ENCODE measurements at regions of chr10 and their contacts with region 1.

Region 1: DNA sequence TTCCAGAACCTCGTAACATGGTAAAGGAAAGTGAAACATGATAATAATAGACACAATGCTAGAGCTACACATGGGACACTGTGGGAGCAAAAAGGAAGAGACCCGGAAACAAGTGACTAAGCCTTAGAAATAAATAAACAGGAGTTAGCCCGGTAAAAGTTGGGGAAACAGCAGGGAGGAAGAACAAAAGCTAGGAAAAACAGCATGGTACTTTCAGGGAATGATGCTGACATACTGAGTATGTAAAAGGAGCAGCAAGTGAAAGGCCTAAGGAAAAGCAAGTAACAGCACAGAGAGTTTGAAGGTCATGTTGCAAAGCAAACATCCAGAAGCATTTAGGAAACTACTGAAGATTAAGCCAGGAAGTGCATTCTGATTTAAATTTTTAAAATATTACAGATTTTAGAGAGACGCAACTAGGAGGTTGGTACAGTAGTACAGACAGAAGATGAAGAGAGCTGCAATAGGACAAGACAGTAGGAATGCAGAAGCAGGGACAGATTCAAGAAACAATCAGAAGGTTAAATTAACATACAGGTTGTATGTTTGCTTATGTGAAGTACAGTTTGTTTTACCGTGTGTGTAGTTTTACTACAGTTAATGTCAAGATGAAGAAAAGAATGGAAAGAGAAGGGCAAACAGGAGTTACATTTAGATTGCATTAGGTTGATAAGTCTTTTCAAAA is 63.7 kb downstream of the ARHGAP12 start:
- DNase-seq: no peak
- ATAC-seq: peak in 1 of 4 donors; percentile 19
- H3K4me3 ChIP-seq: peak overlapping the region; percentile 5
- H3K27ac ChIP-seq: peak overlapping the region; percentile 7
- H3K4me1 ChIP-seq: peaks cover 21% of the 10 kb centered on the region
- H3K27me3 ChIP-seq: no peaks in the 10 kb centered on the region
- CTCF ChIP-seq: no peak

Region 2: GRCh38 chr10:31928549-31929260 is 63.7 kb after region 1 on chr10 and contains the start of gene ARHGAP12:
- intact Hi-C with region 1: loop called (anchors 5 to 10 kb)
- DNase-seq: peak; percentile 93 to 95
- ATAC-seq: peak; percentile 96 to 98 (median 96)
- H3K4me3 ChIP-seq: peak within 1 kb of the TSS; percentile 90
- H3K27ac ChIP-seq: peak within 1 kb of the TSS; percentile 91
- H3K4me1 ChIP-seq: peaks cover 23% of the 10 kb centered on the region
- H3K27me3 ChIP-seq: no peaks in the 10 kb centered on the region
- CTCF ChIP-seq: peak; percentile 9
- total RNA-seq, gene ARHGAP12: 10.9 to 14.9 (median 11.3) TPM

Region 3: DNA sequence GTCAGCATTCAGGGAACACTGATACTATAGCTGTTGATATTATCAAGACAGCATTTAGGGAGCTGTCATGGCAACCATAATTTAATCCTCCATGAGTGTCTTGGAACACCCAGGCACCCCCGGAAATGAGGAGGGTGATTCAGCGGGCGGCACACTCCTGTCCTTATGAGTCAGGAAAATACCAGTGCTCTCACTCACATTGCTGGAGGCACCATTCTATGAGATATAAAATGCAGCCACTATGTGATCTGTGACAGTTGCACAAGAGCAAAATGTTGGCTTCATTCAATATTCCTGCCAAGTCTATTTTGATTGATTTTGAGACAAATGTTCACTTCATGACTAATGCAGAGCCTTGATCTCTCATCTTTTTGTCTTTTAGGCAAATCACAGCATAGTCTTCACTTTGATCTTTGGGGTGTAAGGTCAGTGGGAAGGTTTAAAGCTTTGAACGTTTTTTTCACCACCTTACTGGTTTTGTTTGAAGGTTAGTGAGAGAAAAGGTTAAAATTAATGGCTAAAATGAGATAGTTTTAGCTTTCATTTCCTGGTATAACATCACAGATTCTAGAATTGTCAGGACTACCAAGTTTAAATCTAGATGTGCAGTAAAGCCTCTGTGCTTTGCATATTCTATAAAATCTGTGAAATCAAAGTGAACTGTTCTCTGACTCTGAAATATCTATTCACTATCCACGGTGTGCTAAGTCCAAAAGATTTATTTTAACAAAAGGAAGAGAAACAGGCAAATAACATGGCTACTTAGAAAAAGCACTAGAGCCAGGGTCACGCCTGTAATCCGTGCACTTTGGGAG is 76.1 kb after region 1 on chr10:
- intact Hi-C with region 1: loop called (anchors 5 kb)
- DNase-seq: peak; percentile 56 to 71
- ATAC-seq: peak; percentile 97 to 99 (median 98)
- H3K4me3 ChIP-seq: no peak overlapping the region
- H3K27ac ChIP-seq: peak overlapping the region; percentile 6
- H3K4me1 ChIP-seq: peaks cover 5% of the 10 kb centered on the region
- H3K27me3 ChIP-seq: no peaks in the 10 kb centered on the region
- CTCF ChIP-seq: no peak

Region 4: GRCh38 chr10:31947144-31947926 is 82.4 kb after region 1 on chr10:
- intact Hi-C with region 1: loop called (anchors 5 kb)
- DNase-seq: no peak
- ATAC-seq: peak; percentile 47 to 84 (median 68)
- H3K4me3 ChIP-seq: peak overlapping the region; percentile 27
- H3K27ac ChIP-seq: no peak overlapping the region
- H3K4me1 ChIP-seq: no peaks in the 10 kb centered on the region
- H3K27me3 ChIP-seq: no peaks in the 10 kb centered on the region
- CTCF ChIP-seq: peak; percentile 39

Region 5: GRCh38 chr10:32005050-32005449 is 140.1 kb after region 1 on chr10:
- intact Hi-C with region 1: loop called in 1 of 2 experiments (anchors 2 kb)
- DNase-seq: no peak
- ATAC-seq: peak; percentile 44 to 66 (median 54)
- H3K4me3 ChIP-seq: no peak overlapping the region
- H3K27ac ChIP-seq: no peak overlapping the region
- H3K4me1 ChIP-seq: peaks cover 15% of the 10 kb centered on the region
- H3K27me3 ChIP-seq: no peaks in the 10 kb centered on the region
- CTCF ChIP-seq: peak; percentile 47

Measured in psoas muscle (tissue), 8 donors.